ENCODE measurements at regions of chr7 and their contacts with region 1.

Region 1: DNA sequence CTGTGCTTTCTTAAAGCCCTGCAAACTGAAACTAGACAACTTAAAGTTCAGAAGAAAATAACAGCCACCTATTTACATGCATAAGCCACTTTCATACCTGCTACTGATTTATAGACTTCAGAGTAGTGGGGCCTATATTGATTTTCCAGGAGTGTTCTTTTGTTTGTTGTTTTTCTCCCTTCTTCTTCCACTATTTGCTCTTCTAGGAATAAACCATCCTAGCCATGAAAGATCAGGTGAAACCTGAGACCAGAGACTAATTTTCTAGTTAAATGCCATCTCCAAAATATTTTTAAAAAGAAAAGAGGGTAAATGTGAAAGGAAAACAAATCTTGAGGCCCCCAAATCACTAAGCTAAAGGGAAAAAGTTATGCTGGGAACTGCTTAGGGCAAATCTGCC is 72.4 kb upstream of the C1GALT1 start:
- DNase-seq: no peak
- ATAC-seq: no peak

Region 2: DNA sequence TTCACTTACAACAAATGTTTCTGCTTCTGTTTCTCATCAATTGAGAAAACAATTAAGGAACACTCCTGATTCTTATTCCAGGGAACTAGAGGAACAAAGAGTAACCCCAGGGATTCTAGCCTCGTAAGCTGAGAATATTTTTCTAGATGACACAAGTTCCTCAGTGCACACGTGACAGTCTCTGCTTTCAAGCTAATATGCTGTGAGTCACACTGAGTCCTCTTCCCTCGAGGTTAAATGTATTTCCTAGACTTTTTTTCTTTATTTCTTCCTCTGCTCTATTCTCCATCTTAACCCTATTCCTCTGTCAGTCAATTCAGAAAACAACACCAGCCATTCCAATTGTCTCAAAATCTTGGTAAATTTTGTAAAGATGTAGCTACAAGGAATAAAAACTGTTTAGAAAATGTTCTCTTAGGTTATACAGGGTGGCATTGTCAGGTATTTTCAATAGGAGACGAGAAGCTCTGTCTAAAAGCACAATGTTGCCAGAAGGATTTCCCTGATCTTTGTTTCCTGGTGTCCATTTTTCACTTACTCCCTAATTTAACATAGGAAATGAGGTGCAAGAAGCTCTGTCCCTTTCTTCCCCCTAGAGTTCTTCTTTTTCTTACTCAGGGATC is 66.6 kb after region 1 on chr7:
- intact Hi-C with region 1: loop called in 1 of 2 experiments (anchors 5 kb)
- DNase-seq: no peak
- ATAC-seq: peak in 1 of 2 donors; percentile 72

Region 3: DNA sequence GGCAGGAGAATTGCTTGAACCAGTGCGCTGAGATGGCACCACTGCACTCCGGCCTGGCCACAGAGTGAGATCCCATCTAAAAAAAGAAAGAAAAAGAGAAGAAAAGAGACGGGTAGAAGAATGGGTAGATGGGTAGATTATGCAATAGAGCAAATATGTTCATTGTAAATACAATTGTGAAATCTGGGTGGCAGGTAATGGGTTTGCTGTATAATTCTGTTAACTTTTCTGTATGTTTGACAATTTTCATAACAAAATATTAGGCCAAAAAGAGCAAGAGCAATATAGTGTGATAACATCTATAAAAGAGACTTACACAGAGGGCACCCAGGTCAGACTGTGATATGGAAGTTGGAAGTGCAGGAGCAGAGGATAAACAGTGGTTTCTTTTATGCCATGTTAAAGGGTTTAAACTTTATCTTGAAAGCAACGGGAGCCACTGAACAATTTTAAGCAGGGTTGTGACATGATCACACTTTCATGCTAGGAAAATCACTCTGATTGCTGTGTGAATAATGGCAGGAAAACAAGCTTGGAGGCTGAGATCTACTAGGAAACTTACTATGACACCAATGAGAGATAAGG is 432.4 kb after region 1 on chr7:
- intact Hi-C with region 1: loop called (anchors 5 to 10 kb)
- DNase-seq: no peak
- ATAC-seq: no peak

Measured in left cardiac atrium (tissue), 4 donors.